ENCODE measurements at regions of chr18 and their contacts with region 1.

Region 1: GRCh38 chr18:49768051-49768391 is 45.3 kb downstream of the ACAA2 start:
- DNase-seq: peak in 1 of 2 donors; percentile 21
- ATAC-seq: no peak
- H3K4me3 ChIP-seq: no peak overlapping the region
- H3K27ac ChIP-seq: no peak overlapping the region
- H3K4me1 ChIP-seq: no peaks in the 10 kb centered on the region
- H3K27me3 ChIP-seq: no peaks in the 10 kb centered on the region
- CTCF ChIP-seq: peak in 4 of 5 experiments; percentile 15 to 52 (median 26)
- POLR2A ChIP-seq: no peak

Region 2: GRCh38 chr18:49500201-49500921 is 267.7 kb before region 1 on chr18:
- in situ Hi-C with region 1: no loop called
- intact Hi-C with region 1: no loop called
- DNase-seq: no peak
- ATAC-seq: no peak
- H3K4me3 ChIP-seq: no peak overlapping the region
- H3K27ac ChIP-seq: no peak overlapping the region
- H3K4me1 ChIP-seq: no peaks in the 10 kb centered on the region
- H3K27me3 ChIP-seq: peaks cover 4 to 10% (median 6%) of the 10 kb centered on the region in 3 donors
- CTCF ChIP-seq: no peak
- POLR2A ChIP-seq: no peak

Region 3: GRCh38 chr18:49510393-49511115 is 257.5 kb before region 1 on chr18:
- in situ Hi-C with region 1: no loop called
- intact Hi-C with region 1: loop called (anchors 5 kb)
- DNase-seq: no peak
- ATAC-seq: peak in 1 of 2 donors; percentile 53
- H3K4me3 ChIP-seq: no peak overlapping the region
- H3K27ac ChIP-seq: no peak overlapping the region
- H3K4me1 ChIP-seq: no peaks in the 10 kb centered on the region
- H3K27me3 ChIP-seq: peaks cover 0 to 3% (median 0%) of the 10 kb centered on the region in 3 donors
- CTCF ChIP-seq: peak; percentile 42 to 76 (median 64)
- POLR2A ChIP-seq: no peak

Region 4: DNA sequence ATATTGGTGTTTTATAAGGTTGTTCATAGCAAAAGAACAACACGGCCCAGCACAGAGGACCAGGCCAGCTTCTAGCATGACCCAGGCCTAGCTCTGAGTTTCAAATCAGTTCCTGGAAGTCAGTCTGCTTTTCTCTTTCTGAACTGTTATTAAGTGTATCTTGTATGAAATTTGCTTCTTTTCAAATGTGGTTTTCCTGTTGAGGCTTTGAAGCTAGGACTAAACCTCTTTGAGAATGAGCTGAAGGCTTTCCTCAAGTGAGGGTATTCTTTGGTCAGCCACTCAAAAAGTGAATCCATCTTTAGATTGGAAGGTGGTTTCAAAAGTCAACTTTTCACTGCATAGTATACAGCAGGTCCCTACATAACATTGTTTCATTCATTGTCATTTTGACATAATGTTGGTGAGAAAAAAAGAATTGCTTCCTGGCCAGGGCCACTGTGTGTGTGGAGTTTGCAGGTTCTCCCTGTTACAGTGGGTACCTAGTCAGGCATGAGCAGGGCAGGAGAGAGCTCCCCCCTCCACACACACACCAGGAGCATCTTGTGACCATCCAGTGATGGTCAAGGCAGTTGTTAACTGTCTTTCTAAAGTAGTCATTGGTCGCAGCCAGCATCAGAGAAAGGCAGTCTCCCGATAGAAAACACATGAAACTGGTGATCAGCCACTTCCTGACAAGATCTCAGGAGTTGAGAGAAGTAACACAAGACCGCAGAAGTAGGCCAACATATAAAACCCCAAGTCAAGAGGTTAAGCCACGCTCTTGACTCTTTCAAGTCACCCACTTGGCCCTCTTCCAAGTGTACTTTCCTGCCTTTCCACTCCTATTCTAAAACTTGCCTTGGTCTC is 52.0 kb after region 1 on chr18:
- in situ Hi-C with region 1: no loop called
- intact Hi-C with region 1: no loop called
- DNase-seq: no peak
- ATAC-seq: no peak
- H3K4me3 ChIP-seq: no peak overlapping the region
- H3K27ac ChIP-seq: no peak overlapping the region
- H3K4me1 ChIP-seq: peaks cover 0 to 4% of the 10 kb centered on the region in 2 donors
- H3K27me3 ChIP-seq: no peaks in the 10 kb centered on the region
- CTCF ChIP-seq: no peak
- POLR2A ChIP-seq: no peak